Ascending aorta (tissue), 2 donors: ENCODE measurements at regions of chr11 and their contacts with region 1.

Region 1: DNA sequence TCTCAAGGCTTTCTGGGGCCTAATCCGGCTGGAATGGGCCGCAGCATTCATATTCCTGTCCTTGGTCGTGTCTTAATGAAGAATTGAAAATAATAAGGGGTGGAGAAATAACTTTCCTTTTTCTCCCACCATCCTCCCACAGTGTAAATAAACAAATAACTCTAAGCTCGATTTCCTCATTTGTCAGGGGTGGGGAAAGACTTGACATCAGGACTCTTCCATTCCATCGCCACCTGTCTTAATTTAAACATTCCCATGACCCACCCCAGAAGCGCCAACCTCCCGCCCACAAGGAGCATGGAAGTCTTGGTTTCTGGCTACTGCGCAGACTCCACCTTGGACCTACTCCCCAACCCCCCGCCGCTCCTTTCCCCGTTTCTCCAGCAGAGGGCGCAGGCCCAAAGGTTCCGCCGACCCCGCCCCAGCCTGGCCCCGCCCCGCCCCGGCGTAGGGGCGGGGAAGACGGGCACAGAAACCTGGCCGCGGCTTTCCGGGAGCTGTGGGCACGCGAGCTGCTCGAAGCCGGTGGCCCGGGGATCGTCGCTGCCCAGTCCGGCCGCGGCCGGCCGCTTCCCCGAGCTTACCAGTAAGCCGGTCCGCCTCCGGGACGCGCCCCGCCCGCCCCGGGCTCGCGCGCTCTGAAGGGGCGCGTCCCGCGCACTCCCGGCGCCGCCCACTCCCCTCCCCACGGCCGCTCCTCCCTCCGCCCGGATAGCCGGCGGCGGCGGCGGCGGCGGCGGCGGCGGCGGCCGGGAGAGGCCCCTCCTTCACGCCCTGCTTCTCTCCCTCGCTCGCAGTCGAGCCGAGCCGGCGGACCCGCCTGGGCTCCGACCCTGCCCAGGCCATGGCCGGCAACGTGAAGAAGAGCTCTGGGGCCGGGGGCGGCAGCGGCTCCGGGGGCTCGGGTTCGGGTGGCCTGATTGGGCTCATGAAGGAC is at the start of gene CBL:
- DNase-seq: peak; percentile 63 to 97
- H3K4me3 ChIP-seq: peak within 1 kb of the TSS; percentile 70
- H3K27ac ChIP-seq: peak within 1 kb of the TSS; percentile 92 to 96
- H3K4me1 ChIP-seq: peaks cover 0 to 14% of the 10 kb centered on the region in 2 donors
- H3K27me3 ChIP-seq: no peaks in the 10 kb centered on the region
- CTCF ChIP-seq: peak; percentile 78 to 98 (median 96)
- total RNA-seq, gene CBL: 21.6 TPM

Region 2: DNA sequence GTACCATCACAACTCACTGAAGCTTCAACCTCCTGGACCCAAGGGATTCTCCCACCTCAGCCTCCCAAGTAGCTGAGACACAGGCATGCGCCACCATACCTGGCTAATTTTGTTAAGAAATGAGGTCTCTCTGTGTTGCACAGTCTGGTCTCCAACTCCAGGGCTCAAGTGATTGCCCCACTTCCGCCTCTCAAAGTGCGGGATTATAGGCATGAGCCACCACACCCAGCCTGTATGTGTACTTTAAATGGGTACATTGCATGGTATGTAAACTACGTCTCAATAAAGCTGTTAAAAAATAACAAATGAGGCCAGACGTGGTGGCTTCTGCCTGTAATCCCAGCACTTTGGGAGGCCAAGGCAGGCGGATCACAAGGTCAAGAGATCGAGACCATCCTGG is 378.7 kb before region 1 on chr11:
- intact Hi-C with region 1: no loop called
- DNase-seq: no peak
- H3K4me3 ChIP-seq: no peak overlapping the region
- H3K27ac ChIP-seq: no peak overlapping the region
- H3K4me1 ChIP-seq: no peaks in the 10 kb centered on the region
- H3K27me3 ChIP-seq: no peaks in the 10 kb centered on the region
- CTCF ChIP-seq: no peak

Region 3: GRCh38 chr11:118988280-118988679 is 217.6 kb before region 1 on chr11:
- intact Hi-C with region 1: no loop called
- DNase-seq: no peak
- H3K4me3 ChIP-seq: no peak overlapping the region
- H3K27ac ChIP-seq: no peak overlapping the region
- H3K4me1 ChIP-seq: no peaks in the 10 kb centered on the region
- H3K27me3 ChIP-seq: no peaks in the 10 kb centered on the region
- CTCF ChIP-seq: no peak

Region 4: DNA sequence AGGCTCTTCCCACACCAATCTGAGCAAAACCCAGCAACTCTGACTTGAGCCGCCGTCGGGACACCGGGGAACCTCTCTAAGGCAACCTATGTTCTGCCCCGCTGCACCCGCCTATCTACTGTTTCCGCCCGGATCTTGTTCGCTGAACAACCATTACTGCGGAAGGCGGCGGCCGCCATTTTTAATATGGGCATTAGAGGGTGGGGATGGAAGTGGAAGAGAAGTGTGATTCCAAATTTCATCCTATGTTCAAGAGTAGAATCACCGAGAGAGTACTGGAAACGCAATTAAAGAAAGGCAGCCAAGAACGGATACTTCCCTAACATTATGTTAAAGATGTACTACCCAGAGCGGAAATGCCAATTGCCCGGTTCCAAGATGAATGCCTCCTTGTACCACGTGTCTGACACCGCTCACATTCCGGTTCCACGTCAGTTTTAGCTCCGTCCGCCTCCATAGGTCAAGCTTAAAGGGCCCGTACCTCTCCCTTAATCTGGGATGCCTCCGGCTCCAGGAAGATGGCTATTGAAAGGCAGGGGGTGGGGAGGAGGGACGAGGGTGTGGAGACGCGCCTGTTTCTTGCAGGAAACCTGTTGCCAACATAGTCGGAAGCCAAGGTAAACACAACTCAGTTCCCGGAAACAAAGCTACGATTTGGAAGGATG is 104.0 kb before region 1 on chr11 and contains the start of gene DPAGT1:
- intact Hi-C with region 1: loop called (anchors 5 kb)
- DNase-seq: peak; percentile 70 to 97
- H3K4me3 ChIP-seq: peak within 1 kb of the TSS; percentile 75 to 89
- H3K27ac ChIP-seq: peak within 1 kb of the TSS; percentile 92
- H3K4me1 ChIP-seq: peaks cover 20 to 25% of the 10 kb centered on the region in 2 donors
- H3K27me3 ChIP-seq: no peaks in the 10 kb centered on the region
- CTCF ChIP-seq: no peak
- total RNA-seq, gene DPAGT1: 61.9 TPM

Region 5: DNA sequence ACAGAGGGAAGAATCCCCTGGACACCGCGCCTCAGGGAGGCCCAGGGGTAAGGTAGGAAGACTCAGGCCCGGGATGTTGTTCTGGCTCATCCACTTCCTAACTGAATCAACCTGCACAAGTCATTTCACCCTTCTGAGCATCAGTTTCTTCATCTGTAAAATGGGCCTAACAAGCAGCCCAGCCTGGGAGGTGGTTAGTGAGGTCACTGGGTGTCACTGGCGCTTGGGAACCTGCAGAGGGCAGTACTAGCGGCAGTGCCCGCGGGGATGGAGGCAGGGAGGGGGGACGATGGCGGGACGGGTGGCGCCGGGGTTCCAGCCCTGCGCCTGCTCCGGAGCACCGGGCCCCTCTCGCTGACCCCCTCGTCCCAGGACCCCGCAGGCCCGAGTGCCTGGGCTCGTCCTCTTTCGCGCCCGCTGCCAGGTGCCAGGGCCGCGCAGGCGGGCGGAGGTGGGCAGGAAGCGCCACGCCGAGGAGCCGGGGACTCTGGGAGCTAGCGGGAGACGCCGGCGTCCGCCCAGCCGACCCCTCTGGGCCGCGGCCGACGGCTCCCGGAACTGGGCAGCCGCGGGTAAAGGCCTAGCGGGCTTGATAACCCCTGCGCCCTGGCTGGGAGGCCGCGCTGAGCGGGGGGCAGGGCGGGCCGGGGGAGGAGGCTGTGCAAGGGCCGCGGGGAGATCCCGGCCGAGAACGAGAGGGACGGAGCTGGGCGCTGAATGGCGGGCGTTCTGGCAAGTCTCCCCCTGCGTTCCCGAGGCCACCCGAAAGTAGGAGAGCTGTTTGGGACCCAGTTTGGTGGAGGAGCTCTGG is 37.2 kb before region 1 on chr11 and contains the start of gene NLRX1:
- intact Hi-C with region 1: loop called (anchors 2 kb)
- DNase-seq: peak; percentile 30 to 91
- H3K4me3 ChIP-seq: peak within 1 kb of the TSS; percentile 61 to 95
- H3K27ac ChIP-seq: peak within 1 kb of the TSS; percentile 97 to 100
- H3K4me1 ChIP-seq: peaks cover 0 to 2% of the 10 kb centered on the region in 2 donors
- H3K27me3 ChIP-seq: no peaks in the 10 kb centered on the region
- CTCF ChIP-seq: peak; percentile 88 to 96 (median 95)
- total RNA-seq, gene NLRX1: 35.9 TPM

Region 6: DNA sequence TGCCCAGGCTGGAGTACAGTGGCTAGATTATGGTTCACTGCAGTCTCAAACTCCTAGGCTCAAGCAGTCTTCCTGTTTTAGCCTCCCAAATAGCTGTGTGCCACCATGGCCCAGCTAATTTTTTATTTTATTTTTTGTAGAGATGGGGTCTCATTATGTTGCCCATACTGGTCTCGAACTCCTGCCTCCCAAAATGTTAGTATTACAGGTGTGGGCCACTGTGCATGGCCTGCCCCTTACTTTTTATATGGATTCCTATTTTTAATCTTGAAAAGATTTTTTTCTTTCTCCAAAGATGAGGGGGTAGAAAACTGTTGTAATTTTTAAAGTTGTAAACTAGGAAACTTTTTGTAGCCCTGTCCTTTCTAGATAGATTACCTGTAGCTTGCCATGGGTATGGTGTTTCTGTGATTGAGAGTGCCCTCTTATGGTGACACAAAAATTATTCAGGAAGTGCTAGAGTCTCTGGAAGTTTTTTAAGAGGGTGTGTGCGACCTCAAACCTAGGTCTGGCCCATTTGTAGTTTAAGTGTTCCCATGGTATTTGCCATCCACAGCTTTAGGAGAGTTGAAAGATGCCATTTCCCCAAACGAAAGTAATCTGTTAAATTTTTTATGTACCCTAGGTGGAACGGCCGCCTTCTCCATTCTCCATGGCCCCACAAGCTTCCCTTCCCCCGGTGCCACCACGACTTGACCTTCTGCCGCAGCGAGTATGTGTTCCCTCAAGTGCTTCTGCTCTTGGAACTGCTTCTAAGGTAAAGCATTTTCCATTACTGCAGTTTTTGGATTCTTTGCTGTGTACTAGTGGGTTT is 78.7 kb after region 1 on chr11:
- intact Hi-C with region 1: loop called (anchors 2 kb)
- DNase-seq: no peak
- H3K4me3 ChIP-seq: no peak overlapping the region
- H3K27ac ChIP-seq: no peak overlapping the region
- H3K4me1 ChIP-seq: no peaks in the 10 kb centered on the region
- H3K27me3 ChIP-seq: no peaks in the 10 kb centered on the region
- CTCF ChIP-seq: peak in 2 of 3 experiments; percentile 29 to 45

Region 7: GRCh38 chr11:119306373-119306890 is 100.6 kb after region 1 on chr11:
- intact Hi-C with region 1: loop called (anchors 5 kb)
- DNase-seq: peak; percentile 66 to 91
- H3K4me3 ChIP-seq: peak overlapping the region in 1 of 2 donors; percentile 42
- H3K27ac ChIP-seq: peak overlapping the region; percentile 98 to 99
- H3K4me1 ChIP-seq: peaks cover 11 to 43% of the 10 kb centered on the region in 2 donors
- H3K27me3 ChIP-seq: no peaks in the 10 kb centered on the region
- CTCF ChIP-seq: no peak

Region 8: GRCh38 chr11:119323538-119324033 is 117.7 kb after region 1 on chr11:
- intact Hi-C with region 1: loop called (anchors 1 kb)
- DNase-seq: peak in 1 of 2 donors; percentile 89
- H3K4me3 ChIP-seq: no peak overlapping the region
- H3K27ac ChIP-seq: peak overlapping the region in 1 of 2 donors; percentile 98
- H3K4me1 ChIP-seq: peaks cover 6 to 31% of the 10 kb centered on the region in 2 donors
- H3K27me3 ChIP-seq: no peaks in the 10 kb centered on the region
- CTCF ChIP-seq: peak; percentile 71 to 78 (median 76)

Region 9: DNA sequence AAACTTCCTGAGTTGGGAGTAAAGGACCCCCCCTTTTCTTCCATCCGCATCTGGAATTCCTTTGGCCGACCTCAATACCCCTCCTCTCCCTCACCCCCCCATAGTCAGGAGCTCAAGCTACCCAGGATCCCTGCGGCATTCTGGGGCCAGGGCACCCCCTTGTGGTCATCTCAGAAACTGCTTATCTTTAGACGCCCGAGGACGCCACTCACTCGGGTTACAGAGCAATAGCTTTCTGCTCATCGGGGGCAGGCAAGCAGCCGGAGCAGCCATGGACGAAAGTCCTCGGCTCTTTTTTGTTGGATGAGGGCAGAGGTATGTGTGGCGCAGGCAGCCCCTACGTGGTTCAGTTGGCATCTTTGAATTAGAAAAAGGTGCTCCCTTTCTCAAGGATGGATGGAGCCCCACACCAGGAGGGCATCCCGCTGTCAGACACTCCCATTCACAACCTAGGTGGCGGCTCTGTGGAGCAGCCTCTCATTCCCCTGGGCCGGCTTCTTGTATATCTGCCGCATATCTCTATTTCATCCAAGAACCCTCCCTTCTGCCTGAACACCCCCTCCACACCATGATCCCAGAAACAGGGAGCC is 132.6 kb after region 1 on chr11:
- intact Hi-C with region 1: loop called (anchors 1 kb)
- DNase-seq: peak in 1 of 2 donors; percentile 87
- H3K4me3 ChIP-seq: peak overlapping the region in 1 of 2 donors; percentile 94
- H3K27ac ChIP-seq: peak overlapping the region; percentile 88 to 96
- H3K4me1 ChIP-seq: peaks cover 13 to 38% of the 10 kb centered on the region in 2 donors
- H3K27me3 ChIP-seq: no peaks in the 10 kb centered on the region
- CTCF ChIP-seq: peak; percentile 75 to 88 (median 86)